ENCODE measurements at regions of chr1 and their contacts with region 1.

Region 1: GRCh38 chr1:93814059-93814794 is 64.8 kb downstream of the DNTTIP2 start:
- DNase-seq: peak; percentile 52 to 80
- ATAC-seq: peak; percentile 82 to 90
- H3K4me3 ChIP-seq: no peak overlapping the region
- H3K27ac ChIP-seq: peak overlapping the region; percentile 80 to 84
- H3K4me1 ChIP-seq: peaks cover 26% of the 10 kb centered on the region
- CTCF ChIP-seq: peak; percentile 93
- EP300 ChIP-seq: no peak
- POLR2A ChIP-seq: no peak
- RAD21 ChIP-seq: peak; percentile 97 to 100

Region 2: DNA sequence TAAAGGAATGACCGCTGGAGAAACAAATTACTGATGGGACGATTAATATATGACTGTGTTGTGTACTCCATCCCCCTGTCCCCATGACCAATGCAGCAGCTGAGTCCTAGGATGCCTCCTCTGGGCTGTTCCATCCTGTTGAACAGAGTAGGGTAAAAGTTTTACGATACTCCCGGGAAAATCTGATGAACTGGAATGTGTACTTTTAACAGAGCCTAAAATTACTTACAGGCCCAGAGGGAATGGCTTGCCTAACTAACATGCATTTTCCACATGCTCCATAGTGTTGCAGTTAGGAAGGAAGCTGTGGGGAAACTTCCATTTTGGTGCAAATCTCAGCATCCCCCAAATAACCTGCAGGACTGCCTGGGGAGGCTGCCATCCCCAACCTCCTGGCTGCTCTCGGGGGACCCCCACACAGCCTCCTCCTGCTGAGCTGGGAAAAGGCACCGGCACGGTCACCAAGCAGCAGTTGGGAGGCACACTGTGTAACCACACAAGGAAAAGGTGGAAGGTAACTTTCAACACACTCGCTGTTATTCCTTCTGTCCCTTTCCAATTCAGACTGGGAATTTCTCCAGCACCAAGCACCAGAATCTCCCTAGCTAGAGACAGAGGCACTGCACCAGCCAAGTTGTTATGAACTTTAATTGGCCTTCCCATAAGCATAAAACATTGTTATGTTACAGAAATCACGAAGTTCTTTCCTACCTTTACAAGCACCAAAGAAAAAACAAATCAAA is 229.8 kb before region 1 on chr1:
- CTCF ChIA-PET with region 1: interaction called, 10 read pairs
- POLR2A ChIA-PET with region 1: no interaction called
- DNase-seq: no peak
- ATAC-seq: peak; percentile 36 to 52; a peak in 3 of 6 replicates
- H3K4me3 ChIP-seq: no peak overlapping the region; the same call in 2 of the 3 replicates
- H3K27ac ChIP-seq: peak overlapping the region; percentile 73 to 83
- H3K4me1 ChIP-seq: peaks cover 84% of the 10 kb centered on the region
- CTCF ChIP-seq: no peak
- EP300 ChIP-seq: no peak
- POLR2A ChIP-seq: no peak
- RAD21 ChIP-seq: no peak

Region 3: DNA sequence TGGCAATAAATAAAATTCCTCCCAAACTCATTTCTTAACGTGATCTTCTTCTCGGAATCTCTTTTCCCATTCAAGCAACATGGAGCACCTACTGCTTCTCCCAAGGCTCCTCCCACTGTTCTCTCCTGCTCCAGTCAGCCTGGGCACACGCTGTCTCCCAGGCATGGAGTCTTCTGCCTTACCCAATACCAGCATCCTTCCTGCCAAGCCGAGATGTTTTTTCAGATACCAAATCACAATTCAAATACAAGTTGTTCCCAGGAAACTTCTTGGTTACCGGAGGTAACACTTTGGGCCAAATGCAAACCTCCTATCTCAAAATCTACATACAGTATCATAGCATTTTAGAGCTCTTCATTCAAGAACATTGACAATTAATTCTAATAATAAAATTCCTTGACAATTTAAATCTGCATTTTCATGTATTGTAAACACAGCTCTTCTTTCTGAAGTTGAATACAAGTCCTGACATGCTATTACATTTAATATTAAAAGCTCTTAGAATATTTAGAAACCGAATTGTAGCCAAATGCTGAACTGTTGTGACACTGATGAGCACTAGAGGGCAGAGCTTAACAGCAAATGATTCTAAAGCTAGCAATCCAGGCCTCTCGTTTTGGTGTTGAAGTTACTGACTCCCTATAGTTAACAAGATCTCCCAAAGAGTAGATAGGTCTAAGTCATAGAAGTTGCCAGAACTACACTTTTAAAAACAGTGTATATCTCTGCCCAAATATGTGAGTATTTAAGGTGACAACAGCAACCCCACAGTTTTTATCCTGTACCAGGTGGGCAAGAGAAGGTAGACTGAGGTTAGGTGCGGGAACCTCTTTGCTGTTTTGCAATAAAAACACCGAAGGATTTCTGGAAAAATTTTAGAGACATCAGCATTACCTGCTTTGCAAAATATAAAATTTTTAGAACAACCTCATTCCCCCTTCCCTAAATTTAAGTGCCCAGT is 184.8 kb before region 1 on chr1:
- CTCF ChIA-PET with region 1: interaction called, 236 read pairs
- POLR2A ChIA-PET with region 1: interaction called, 4 read pairs
- DNase-seq: peak; percentile 43 to 70
- ATAC-seq: peak; percentile 70 to 79; a peak in 5 of 6 replicates
- H3K4me3 ChIP-seq: no peak overlapping the region
- H3K27ac ChIP-seq: peak overlapping the region; percentile 54 to 61; a peak in 5 of 6 replicates
- H3K4me1 ChIP-seq: peaks cover 76% of the 10 kb centered on the region
- CTCF ChIP-seq: peak; percentile 85
- EP300 ChIP-seq: no peak
- POLR2A ChIP-seq: no peak
- RAD21 ChIP-seq: peak; percentile 91 to 93

Region 4: DNA sequence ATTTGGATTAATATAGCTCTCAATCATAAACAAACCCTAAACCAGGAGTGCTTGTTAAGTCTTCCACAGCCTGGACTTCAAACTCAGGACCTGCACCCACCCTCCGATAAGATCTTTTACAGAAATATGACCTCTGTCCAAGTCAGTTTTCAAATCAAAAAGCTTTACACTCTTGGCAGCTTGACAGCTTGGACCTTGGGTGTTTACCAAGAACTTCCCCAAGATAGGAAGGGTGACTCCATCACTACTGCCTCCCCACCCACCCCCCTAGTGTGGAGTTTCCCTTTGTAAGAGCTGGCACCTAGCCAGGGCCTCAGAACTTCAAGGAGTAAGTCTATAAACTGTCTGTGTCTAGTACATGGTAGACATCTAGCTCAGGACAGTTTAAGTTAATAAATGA is 142.2 kb before region 1 on chr1:
- CTCF ChIA-PET with region 1: interaction called, 76 read pairs
- POLR2A ChIA-PET with region 1: no interaction called
- DNase-seq: peak; percentile 24 to 83
- ATAC-seq: peak; percentile 48 to 72; a peak in 4 of 6 replicates
- H3K4me3 ChIP-seq: no peak overlapping the region; the same call in 1 of the 3 replicates
- H3K27ac ChIP-seq: peak overlapping the region; percentile 74 to 86
- H3K4me1 ChIP-seq: peaks cover 100% of the 10 kb centered on the region
- CTCF ChIP-seq: no peak
- EP300 ChIP-seq: peak in 1 of 2 experiments; percentile 50; a peak in 2 of 5 replicates
- POLR2A ChIP-seq: no peak
- RAD21 ChIP-seq: no peak

Region 5: GRCh38 chr1:93692983-93693591 is 121.1 kb before region 1 on chr1:
- CTCF ChIA-PET with region 1: interaction called, 24 read pairs
- POLR2A ChIA-PET with region 1: interaction called, 4 read pairs
- DNase-seq: peak; percentile 59 to 71
- ATAC-seq: peak; percentile 76 to 82
- H3K4me3 ChIP-seq: peak overlapping the region; percentile 11; the same call in 1 of the 3 replicates
- H3K27ac ChIP-seq: peak overlapping the region; percentile 84 to 99
- H3K4me1 ChIP-seq: peaks cover 67% of the 10 kb centered on the region
- CTCF ChIP-seq: no peak
- EP300 ChIP-seq: peak in 1 of 2 experiments; percentile 7; a peak in 2 of 5 replicates
- POLR2A ChIP-seq: no peak
- RAD21 ChIP-seq: no peak

Region 6: DNA sequence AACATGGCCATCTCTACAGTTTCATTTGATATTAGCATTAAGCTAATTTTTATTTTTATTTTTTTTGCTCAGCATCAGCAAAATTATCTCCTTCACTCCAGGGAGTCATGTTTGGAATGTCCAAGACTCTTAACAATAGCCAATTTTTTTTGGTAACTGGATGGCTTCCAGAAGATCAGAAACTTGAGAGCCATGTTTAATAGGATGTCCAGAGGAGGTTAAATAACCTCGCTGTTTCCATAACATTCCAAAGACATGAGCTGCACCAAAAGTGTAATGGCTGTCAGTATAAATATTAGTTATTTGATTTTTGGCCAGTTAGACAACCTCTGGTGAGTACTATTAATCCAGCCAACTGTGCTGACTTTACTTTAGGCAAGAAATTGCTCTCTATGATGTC is 15.9 kb before region 1 on chr1:
- CTCF ChIA-PET with region 1: interaction called, 21 read pairs
- POLR2A ChIA-PET with region 1: no interaction called
- DNase-seq: peak in 1 of 2 experiments; percentile 15
- ATAC-seq: peak in 1 of 2 experiments; percentile 74; a peak in 2 of 6 replicates
- H3K4me3 ChIP-seq: no peak overlapping the region
- H3K27ac ChIP-seq: peak overlapping the region in 1 of 2 experiments; percentile 63; a peak in 3 of 6 replicates
- H3K4me1 ChIP-seq: peaks cover 27% of the 10 kb centered on the region
- CTCF ChIP-seq: no peak
- EP300 ChIP-seq: no peak
- POLR2A ChIP-seq: no peak
- RAD21 ChIP-seq: no peak

Region 7: GRCh38 chr1:93846211-93846991 is 32.2 kb after region 1 on chr1:
- CTCF ChIA-PET with region 1: interaction called, 63 read pairs
- POLR2A ChIA-PET with region 1: interaction called, 4 read pairs
- DNase-seq: peak; percentile 68 to 82
- ATAC-seq: peak; percentile 74 to 83
- H3K4me3 ChIP-seq: peak overlapping the region; percentile 58
- H3K27ac ChIP-seq: peak overlapping the region; percentile 84 to 95
- H3K4me1 ChIP-seq: peaks cover 19% of the 10 kb centered on the region
- CTCF ChIP-seq: no peak
- EP300 ChIP-seq: no peak
- POLR2A ChIP-seq: peak; percentile 36
- RAD21 ChIP-seq: no peak; a peak in 1 of 5 replicates